ENCODE measurements at regions of chr17 and their contacts with region 1.

Region 1: DNA sequence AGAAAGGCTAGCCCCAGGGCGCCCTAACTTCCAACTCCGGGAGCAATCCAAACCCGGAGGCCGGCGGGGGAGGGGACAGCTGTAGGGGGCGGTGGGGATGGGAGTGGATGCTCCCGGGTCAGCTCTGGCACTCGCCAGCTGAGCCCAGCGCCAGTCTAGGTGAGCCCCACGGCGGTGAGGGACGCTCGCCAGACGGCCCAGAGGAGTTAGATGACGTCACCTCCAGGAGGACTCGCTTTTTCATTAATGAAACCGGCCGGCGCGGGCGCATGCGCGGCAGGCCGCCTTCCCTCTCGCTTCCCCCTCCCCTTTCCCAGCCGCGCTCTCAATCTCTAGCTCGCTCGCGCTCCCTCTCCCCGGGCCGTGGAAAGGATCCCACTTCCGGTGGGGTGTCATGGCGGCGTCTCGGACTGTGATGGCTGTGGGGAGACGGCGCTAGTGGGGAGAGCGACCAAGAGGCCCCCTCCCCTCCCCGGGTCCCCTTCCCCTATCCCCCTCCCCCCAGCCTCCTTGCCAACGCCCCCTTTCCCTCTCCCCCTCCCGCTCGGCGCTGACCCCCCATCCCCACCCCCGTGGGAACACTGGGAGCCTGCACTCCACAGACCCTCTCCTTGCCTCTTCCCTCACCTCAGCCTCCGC is at the start of gene NF1:
- DNase-seq: peak; percentile 99
- H3K4me3 ChIP-seq: peak within 1 kb of the TSS; percentile 73 to 100 (median 88)
- H3K27ac ChIP-seq: peak within 1 kb of the TSS; percentile 89 to 98 (median 94)
- H3K4me1 ChIP-seq: peaks cover 0 to 11% (median 9%) of the 10 kb centered on the region in 4 donors
- H3K27me3 ChIP-seq: no peaks in the 10 kb centered on the region
- CTCF ChIP-seq: no peak
- EP300 ChIP-seq: no peak
- POLR2A ChIP-seq: peak in 1 of 2 donors; percentile 29
- total RNA-seq, gene NF1: 40.7 to 83.8 (median 60.2) TPM

Region 2: GRCh38 chr17:30961209-30962188 is 133.2 kb before region 1 on chr17:
- intact Hi-C with region 1: no loop called
- DNase-seq: no peak
- H3K4me3 ChIP-seq: no peak overlapping the region
- H3K27ac ChIP-seq: peak overlapping the region in 1 of 4 donors; percentile 8
- H3K4me1 ChIP-seq: peaks cover 0 to 6% (median under 1%) of the 10 kb centered on the region in 4 donors
- H3K27me3 ChIP-seq: no peaks in the 10 kb centered on the region
- CTCF ChIP-seq: no peak
- EP300 ChIP-seq: no peak
- POLR2A ChIP-seq: no peak

Region 3: DNA sequence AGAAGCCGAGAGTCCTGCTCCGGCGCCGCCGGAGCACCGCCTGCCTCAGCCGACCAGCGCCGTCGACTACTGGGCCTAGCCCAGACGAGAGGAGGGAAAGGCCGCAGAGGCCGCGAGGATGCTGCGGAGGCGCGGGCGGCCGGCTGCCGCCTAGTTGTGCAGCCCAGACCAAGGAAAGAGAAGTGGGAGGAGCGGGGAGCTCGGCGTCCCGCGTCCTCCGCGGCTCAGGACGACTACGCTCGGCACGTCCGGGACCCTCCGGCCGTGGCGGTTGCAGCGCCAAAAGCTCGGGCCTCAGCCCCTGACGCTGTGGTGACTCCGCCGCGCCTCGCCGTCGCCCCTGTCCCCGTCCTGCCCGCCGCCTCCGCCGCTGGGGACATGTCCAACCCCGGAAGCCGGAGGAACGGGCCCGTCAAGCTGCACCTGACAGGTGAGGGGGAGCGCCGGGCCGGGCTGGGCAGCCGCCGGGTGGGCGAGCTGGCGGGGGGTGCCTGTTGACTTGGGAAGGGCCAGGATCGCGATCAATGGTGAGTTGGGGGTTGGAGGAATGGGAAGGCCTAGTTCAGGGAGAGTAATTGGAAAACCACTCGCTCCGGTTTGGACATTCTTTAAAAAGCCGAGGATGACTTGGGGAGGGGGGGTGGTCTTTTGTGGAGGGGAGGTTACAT is 86.2 kb before region 1 on chr17:
- intact Hi-C with region 1: loop called (anchors 1 kb)
- DNase-seq: peak; percentile 73
- H3K4me3 ChIP-seq: peak overlapping the region; percentile 49 to 66 (median 63)
- H3K27ac ChIP-seq: peak overlapping the region; percentile 72 to 92 (median 83)
- H3K4me1 ChIP-seq: peaks cover 0 to 7% (median 0%) of the 10 kb centered on the region in 4 donors
- H3K27me3 ChIP-seq: no peaks in the 10 kb centered on the region
- CTCF ChIP-seq: no peak
- EP300 ChIP-seq: no peak
- POLR2A ChIP-seq: no peak

Measured in sigmoid colon (tissue), 7 donors.